Activated CD4-positive, alpha-beta T cell treated with anti-CD3 and anti-CD28 coated beads for 36 hours (primary cell): ENCODE measurements at regions of chr17 and their contacts with region 1.

Region 1: DNA sequence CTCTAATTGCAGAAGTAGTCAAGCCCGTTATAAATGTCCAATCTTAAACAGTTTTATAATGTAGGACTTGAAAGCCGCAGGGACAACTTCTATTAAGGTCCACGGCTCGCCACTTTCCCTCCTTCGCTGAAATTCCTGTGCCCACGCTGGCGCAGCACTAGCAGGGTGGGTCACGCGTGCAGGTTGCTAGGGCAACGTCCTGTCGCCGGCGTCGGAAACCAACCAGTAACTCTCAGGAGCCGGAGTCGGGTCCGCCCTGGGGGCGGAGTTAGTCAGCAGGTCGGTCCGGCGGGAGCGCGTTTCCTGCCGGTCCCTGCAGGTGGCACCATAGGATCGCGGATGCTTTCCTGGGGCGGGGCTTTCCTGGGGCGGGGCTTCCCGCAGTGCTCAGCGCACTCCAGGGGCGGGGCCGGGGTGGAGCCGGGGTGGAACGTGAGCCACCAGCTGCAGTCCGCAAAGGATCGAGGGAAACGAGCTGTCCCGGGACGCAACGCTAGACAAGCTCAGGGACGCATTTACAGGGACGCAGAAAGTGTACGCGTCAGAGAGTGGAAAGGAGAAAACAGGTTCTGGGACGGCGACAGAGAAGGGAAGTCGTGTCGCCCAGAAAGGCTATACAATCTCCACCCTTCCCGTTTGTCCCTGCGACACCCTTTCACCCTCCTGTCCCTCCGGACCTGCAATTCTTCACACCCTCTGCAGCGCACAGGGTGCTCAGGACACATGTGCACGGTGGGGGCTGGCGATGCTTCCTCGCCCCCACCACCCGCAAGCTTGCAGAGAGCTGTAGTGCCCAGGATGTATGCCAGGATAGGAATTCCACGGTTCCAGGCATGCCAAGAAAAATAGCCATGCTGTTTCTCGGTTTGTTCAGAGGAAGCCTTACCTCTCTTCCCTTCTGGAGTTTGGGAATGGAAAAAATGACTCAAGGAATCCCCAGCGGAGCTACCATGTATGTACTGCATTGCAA is 12.4 kb downstream of the COPZ2 start:
- DNase-seq: peak; percentile 99
- ATAC-seq: peak; percentile 89
- H3K4me3 Mint-ChIP-seq: peak overlapping the region; percentile 77
- H3K27ac Mint-ChIP-seq: no peak overlapping the region
- H3K4me1 Mint-ChIP-seq: peaks cover 26% of the 10 kb centered on the region
- H3K27me3 Mint-ChIP-seq: peaks cover 25% of the 10 kb centered on the region

Region 2: GRCh38 chr17:47840740-47841603 is 184.2 kb before region 1 on chr17 and contains the start of gene SCRN2:
- CTCF ChIA-PET with region 1: no interaction called
- POLR2A ChIA-PET with region 1: no interaction called
- intact Hi-C with region 1: loop called in 1 of 2 experiments (anchors 2 kb)
- DNase-seq: peak; percentile 94
- ATAC-seq: peak; percentile 92
- H3K4me3 Mint-ChIP-seq: peak within 1 kb of the TSS; percentile 99
- H3K27ac Mint-ChIP-seq: peak within 1 kb of the TSS; percentile 89
- H3K4me1 Mint-ChIP-seq: peaks cover 22% of the 10 kb centered on the region
- H3K27me3 Mint-ChIP-seq: peaks cover 15% of the 10 kb centered on the region
- total RNA-seq, gene SCRN2: 21.5 to 25.2 TPM

Region 3: GRCh38 chr17:47978324-47978723 is 46.9 kb before region 1 on chr17:
- CTCF ChIA-PET with region 1: interaction called, 28 read pairs
- POLR2A ChIA-PET with region 1: no interaction called
- intact Hi-C with region 1: loop called in 1 of 2 experiments (anchors 1 kb)
- DNase-seq: peak; percentile 72
- ATAC-seq: peak; percentile 74
- H3K4me3 Mint-ChIP-seq: no peak overlapping the region
- H3K27ac Mint-ChIP-seq: no peak overlapping the region
- H3K4me1 Mint-ChIP-seq: no peaks in the 10 kb centered on the region
- H3K27me3 Mint-ChIP-seq: no peaks in the 10 kb centered on the region

Region 4: GRCh38 chr17:48068491-48068961 is 43.3 kb after region 1 on chr17:
- CTCF ChIA-PET with region 1: interaction called, 123 read pairs
- POLR2A ChIA-PET with region 1: no interaction called
- intact Hi-C with region 1: no loop called
- DNase-seq: peak; percentile 36
- ATAC-seq: peak; percentile 78
- H3K4me3 Mint-ChIP-seq: no peak overlapping the region
- H3K27ac Mint-ChIP-seq: no peak overlapping the region
- H3K4me1 Mint-ChIP-seq: peaks cover 2% of the 10 kb centered on the region
- H3K27me3 Mint-ChIP-seq: no peaks in the 10 kb centered on the region

Region 5: GRCh38 chr17:48131216-48131824 is 106.1 kb after region 1 on chr17:
- CTCF ChIA-PET with region 1: interaction called, 37 read pairs
- POLR2A ChIA-PET with region 1: no interaction called
- intact Hi-C with region 1: loop called (anchors 1 kb)
- DNase-seq: peak; percentile 68
- ATAC-seq: peak; percentile 85
- H3K4me3 Mint-ChIP-seq: no peak overlapping the region
- H3K27ac Mint-ChIP-seq: peak overlapping the region; percentile 2
- H3K4me1 Mint-ChIP-seq: no peaks in the 10 kb centered on the region
- H3K27me3 Mint-ChIP-seq: no peaks in the 10 kb centered on the region

Region 6: GRCh38 chr17:48618256-48618897 is 593.2 kb after region 1 on chr17:
- CTCF ChIA-PET with region 1: interaction called, 4 read pairs
- POLR2A ChIA-PET with region 1: interaction called, 3 read pairs
- intact Hi-C with region 1: loop called (anchors 1 to 2 kb)
- DNase-seq: peak; percentile 91
- ATAC-seq: peak; percentile 69
- H3K4me3 Mint-ChIP-seq: no peak overlapping the region
- H3K27ac Mint-ChIP-seq: no peak overlapping the region
- H3K4me1 Mint-ChIP-seq: peaks cover 36% of the 10 kb centered on the region
- H3K27me3 Mint-ChIP-seq: peaks cover 82% of the 10 kb centered on the region